GM10248 (cell line): ENCODE measurements at regions of chr4 and their contacts with region 1.

Region 1: GRCh38 chr4:145618932-145619638 is at the start of gene MMAA:
- DNase-seq: peak; percentile 97
- CTCF ChIP-seq: peak; percentile 41

Region 2: DNA sequence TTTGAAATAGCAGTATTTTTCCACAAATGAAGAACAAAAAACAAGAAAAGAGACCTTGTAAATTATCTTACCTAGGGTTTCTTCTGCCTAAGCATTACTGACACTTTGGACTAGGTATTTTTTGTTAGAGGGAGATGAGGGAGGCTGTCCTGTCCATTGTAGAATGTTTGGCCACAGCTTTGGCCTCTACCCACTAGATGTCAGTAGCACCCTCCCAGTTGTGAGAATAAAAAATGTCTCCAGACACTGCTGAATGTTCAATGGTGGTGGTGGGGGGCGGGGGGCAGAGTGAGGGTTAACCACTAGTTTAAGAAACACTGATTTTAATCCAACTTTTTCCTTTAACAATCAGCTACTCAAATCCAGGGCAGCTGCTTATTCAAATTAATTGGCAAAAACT is 464.5 kb before region 1 on chr4:
- CTCF ChIA-PET with region 1: interaction called, 10 read pairs
- POLR2A ChIA-PET with region 1: no interaction called
- DNase-seq: peak; percentile 26
- CTCF ChIP-seq: peak; percentile 74

Region 3: GRCh38 chr4:145180298-145181090 is 438.6 kb before region 1 on chr4 and contains the start of gene OTUD4:
- CTCF ChIA-PET with region 1: interaction called, 12 read pairs
- POLR2A ChIA-PET with region 1: no interaction called
- DNase-seq: peak; percentile 91
- CTCF ChIP-seq: peak; percentile 62

Region 4: GRCh38 chr4:145216535-145216934 is 402.6 kb before region 1 on chr4:
- CTCF ChIA-PET with region 1: interaction called, 24 read pairs
- POLR2A ChIA-PET with region 1: no interaction called
- DNase-seq: no peak
- CTCF ChIP-seq: peak; percentile 40

Region 5: GRCh38 chr4:146004730-146005129 is 385.6 kb after region 1 on chr4:
- CTCF ChIA-PET with region 1: no interaction called
- POLR2A ChIA-PET with region 1: no interaction called
- DNase-seq: no peak
- CTCF ChIP-seq: no peak